Astrocyte of the cerebellum (primary cell): ENCODE measurements at regions of chr4 and their contacts with region 1.

Region 1: DNA sequence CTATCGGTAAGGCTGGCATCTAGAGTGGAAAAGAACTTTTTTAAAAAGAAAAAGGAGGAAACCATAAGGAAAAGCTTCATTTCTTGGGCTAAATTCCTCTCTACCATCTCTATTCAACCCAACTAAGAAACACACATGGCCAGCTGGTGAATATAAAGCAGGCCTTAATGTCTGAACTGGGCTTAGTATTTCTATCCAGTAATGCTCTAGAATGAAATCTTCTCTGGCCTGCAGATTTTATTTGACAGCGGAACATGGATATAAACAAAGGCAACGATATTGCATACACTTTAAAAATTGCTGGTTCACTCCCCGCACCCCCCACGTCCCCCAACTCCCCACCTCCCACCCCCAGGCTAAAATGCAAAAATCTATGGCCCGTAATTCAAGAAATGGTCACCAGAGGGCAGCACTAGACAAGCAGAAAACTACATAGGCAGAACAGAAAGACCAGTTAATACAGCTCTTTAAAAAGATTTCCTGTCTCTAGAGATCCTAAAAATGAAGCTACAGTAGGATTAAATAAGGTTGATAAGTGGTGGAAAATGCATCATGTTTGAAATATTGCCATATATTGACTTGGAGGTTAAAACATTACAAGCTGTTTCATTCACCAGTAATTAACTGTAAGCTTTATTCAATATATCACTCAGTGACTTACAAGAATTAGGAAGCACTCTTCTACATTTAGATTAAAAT is 155.2 kb upstream of the GALNT7 start:
- DNase-seq: peak; percentile 26
- H3K4me3 ChIP-seq: no peak overlapping the region
- CTCF ChIP-seq: peak; percentile 47

Region 2: DNA sequence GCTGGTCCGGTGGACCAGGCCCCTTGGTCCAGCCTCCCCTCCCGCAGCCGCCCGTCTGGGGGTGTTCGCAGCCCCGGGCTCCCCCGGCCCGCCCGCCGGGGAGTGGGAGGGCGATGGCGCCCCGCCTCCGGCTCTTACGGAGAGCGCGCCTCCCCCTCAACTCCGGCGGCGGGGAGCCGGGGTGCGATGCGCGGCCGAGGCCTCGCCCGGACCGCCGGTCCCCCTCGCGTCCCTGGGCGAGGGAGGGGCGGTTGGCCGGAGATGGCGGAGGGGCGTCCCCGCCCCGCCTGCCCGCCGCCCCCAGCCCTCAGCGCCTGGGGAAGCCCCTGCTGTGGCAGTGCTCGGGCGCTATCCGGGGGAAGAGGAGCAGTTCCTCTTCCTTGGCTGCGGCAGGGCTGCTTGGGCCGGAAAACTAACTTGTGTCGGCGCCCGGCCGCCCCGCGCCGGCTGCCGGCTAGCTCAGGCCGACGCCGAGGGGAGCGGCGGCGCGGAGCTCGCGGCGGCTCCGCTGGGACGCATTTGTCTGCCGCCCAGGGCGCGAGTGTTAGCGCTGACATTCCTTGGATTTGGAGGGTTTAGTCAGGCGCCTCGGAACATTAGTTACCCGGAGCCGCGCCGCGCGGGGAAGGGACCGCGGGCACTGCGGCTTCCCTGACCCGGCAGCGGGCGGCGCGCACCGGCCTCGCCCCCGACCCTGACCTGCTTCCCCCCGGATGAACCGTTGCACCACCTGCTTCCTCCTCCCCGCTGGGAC is 156.2 kb after region 1 on chr4:
- in situ Hi-C with region 1: loop called (anchors 10 kb)
- DNase-seq: no peak
- H3K4me3 ChIP-seq: peak overlapping the region; percentile 52
- CTCF ChIP-seq: peak; percentile 1

Region 3: GRCh38 chr4:173257732-173258717 is 244.6 kb after region 1 on chr4:
- in situ Hi-C with region 1: loop called (anchors 25 kb)
- DNase-seq: peak; percentile 63
- H3K4me3 ChIP-seq: no peak overlapping the region
- CTCF ChIP-seq: peak; percentile 90